T-cell (primary cell): ENCODE measurements at regions of chr11 and their contacts with region 1.

Region 1: GRCh38 chr11:6389921-6390724 is at the start of gene SMPD1:
- DNase-seq: peak; percentile 87 to 97 (median 92)
- ATAC-seq: peak; percentile 86 to 92 (median 88)
- H3K4me3 ChIP-seq: peak within 1 kb of the TSS; percentile 79 to 80
- H3K4me3 Mint-ChIP-seq: peak within 1 kb of the TSS; percentile 88 to 93 (median 90)
- H3K27ac ChIP-seq: peak within 1 kb of the TSS; percentile 85
- H3K27ac Mint-ChIP-seq: peak within 1 kb of the TSS; percentile 97 to 98
- H3K4me1 ChIP-seq: peaks cover 20 to 54% of the 10 kb centered on the region in 2 experiments
- H3K4me1 Mint-ChIP-seq: peaks cover 62 to 71% (median 67%) of the 10 kb centered on the region in 3 donors
- H3K27me3 ChIP-seq: no peaks in the 10 kb centered on the region
- H3K27me3 Mint-ChIP-seq: no peaks in the 10 kb centered on the region
- total RNA-seq, gene SMPD1: 33.5 to 58.3 (median 38.3) TPM

Region 2: DNA sequence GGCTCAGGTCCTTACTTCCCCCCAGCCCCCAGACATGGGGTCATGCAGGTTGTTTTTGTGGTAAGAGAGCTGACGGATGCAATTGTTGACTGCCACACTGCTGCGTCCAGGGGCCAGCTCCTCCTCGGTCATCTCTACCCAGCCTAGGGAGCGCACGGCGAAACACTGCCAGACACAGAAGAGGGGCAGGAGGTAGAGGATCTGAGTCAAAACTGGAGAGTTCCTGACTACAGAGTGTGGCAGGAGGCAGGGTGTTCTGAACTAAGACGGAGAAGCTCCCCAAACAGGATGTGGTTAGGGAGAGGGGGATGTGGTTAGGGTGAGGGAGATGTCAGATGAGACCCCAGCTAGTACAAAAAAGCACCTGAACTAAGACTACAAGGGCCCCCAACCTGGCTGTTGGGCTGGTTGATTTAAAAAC is 12.4 kb after region 1 on chr11:
- CTCF ChIA-PET with region 1: interaction called in 1 of 2 experiments, 15 read pairs
- POLR2A ChIA-PET with region 1: interaction called, 9 to 16 read pairs
- DNase-seq: peak; percentile 51 to 94 (median 83)
- ATAC-seq: peak; percentile 87 to 89 (median 88)
- H3K4me3 ChIP-seq: peak overlapping the region in 1 of 2 donors; percentile 38
- H3K4me3 Mint-ChIP-seq: peak overlapping the region; percentile 73 to 92 (median 78)
- H3K27ac ChIP-seq: peak overlapping the region; percentile 90
- H3K27ac Mint-ChIP-seq: peak overlapping the region; percentile 96 to 99
- H3K4me1 ChIP-seq: peaks cover 62 to 75% of the 10 kb centered on the region in 2 experiments
- H3K4me1 Mint-ChIP-seq: peaks cover 93 to 98% (median 94%) of the 10 kb centered on the region in 3 donors
- H3K27me3 ChIP-seq: no peaks in the 10 kb centered on the region
- H3K27me3 Mint-ChIP-seq: no peaks in the 10 kb centered on the region

Region 3: GRCh38 chr11:6419009-6419631 is 29.0 kb after region 1 on chr11 and contains the start of gene APBB1:
- CTCF ChIA-PET with region 1: interaction called in 1 of 2 experiments, 19 read pairs
- POLR2A ChIA-PET with region 1: interaction called, 3 to 6 read pairs
- DNase-seq: peak; percentile 51 to 88 (median 73)
- ATAC-seq: peak; percentile 70 to 82 (median 78)
- H3K4me3 ChIP-seq: peak within 1 kb of the TSS; percentile 64 to 75
- H3K4me3 Mint-ChIP-seq: peak within 1 kb of the TSS in 1 of 3 donors; percentile 86
- H3K27ac ChIP-seq: peak within 1 kb of the TSS; percentile 57
- H3K27ac Mint-ChIP-seq: peak within 1 kb of the TSS; percentile 89
- H3K4me1 ChIP-seq: peaks cover 36 to 50% of the 10 kb centered on the region in 2 experiments
- H3K4me1 Mint-ChIP-seq: peaks cover 9 to 19% (median 15%) of the 10 kb centered on the region in 3 donors
- H3K27me3 ChIP-seq: peaks cover 0 to 2% of the 10 kb centered on the region in 2 experiments
- H3K27me3 Mint-ChIP-seq: peaks cover 0 to 19% of the 10 kb centered on the region in 2 donors
- total RNA-seq, gene APBB1: 71.3 to 152 (median 106) TPM

Region 4: DNA sequence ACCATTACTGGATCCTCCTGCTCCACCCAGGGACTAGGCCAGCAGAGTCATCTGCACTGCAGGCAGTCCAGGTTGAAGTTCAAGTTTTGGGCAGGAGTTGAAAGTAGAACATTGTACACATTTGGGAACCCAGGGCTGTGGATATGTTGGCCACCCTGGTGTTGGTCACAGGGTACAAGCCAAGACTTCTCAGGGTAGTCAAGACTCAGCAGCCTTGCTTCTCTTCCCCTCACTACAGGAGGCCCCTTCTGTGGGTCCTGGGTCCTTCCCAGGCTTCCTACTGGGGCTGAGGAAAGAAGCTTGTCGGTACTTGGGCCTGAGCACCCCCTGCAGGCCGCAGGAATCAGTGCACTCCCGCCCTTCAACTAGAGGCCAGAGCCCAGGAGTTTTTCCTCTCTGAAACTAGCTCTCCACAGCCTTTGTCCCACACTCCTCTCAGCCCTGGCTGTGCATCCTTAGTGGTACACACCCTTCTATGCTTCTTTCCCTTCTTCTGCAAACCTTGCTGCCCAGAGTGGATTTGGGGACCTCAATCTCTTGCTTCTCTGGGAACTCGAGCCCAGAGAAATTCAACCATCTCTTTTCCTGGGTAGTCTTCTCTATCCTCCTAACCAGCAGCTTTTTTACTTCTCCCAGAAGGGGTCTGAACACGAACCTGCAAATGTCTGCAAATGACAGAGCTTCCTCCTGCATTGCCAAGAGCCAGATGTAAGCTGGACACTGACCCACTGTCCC is 53.3 kb after region 1 on chr11:
- CTCF ChIA-PET with region 1: interaction called, 14 to 26 read pairs
- POLR2A ChIA-PET with region 1: no interaction called
- DNase-seq: peak in 33 of 35 experiments; percentile 20 to 79 (median 48)
- ATAC-seq: peak; percentile 83 to 92 (median 84)
- H3K4me3 ChIP-seq: no peak overlapping the region
- H3K4me3 Mint-ChIP-seq: no peak overlapping the region
- H3K27ac ChIP-seq: no peak overlapping the region
- H3K27ac Mint-ChIP-seq: no peak overlapping the region
- H3K4me1 ChIP-seq: peaks cover 13 to 19% of the 10 kb centered on the region in 2 experiments
- H3K4me1 Mint-ChIP-seq: peaks cover 0 to 3% (median 2%) of the 10 kb centered on the region in 3 donors
- H3K27me3 ChIP-seq: no peaks in the 10 kb centered on the region
- H3K27me3 Mint-ChIP-seq: no peaks in the 10 kb centered on the region

Region 5: GRCh38 chr11:6475968-6476367 is 85.8 kb after region 1 on chr11:
- CTCF ChIA-PET with region 1: interaction called in 1 of 2 experiments, 3 read pairs
- POLR2A ChIA-PET with region 1: interaction called in 1 of 2 experiments, 16 read pairs
- DNase-seq: no peak
- ATAC-seq: no peak
- H3K4me3 ChIP-seq: no peak overlapping the region
- H3K4me3 Mint-ChIP-seq: peak overlapping the region in 1 of 3 donors; percentile 23
- H3K27ac ChIP-seq: no peak overlapping the region
- H3K27ac Mint-ChIP-seq: peak overlapping the region; percentile 23 to 91
- H3K4me1 ChIP-seq: peaks cover 17 to 27% of the 10 kb centered on the region in 2 experiments
- H3K4me1 Mint-ChIP-seq: peaks cover 42 to 44% (median 44%) of the 10 kb centered on the region in 3 donors
- H3K27me3 ChIP-seq: no peaks in the 10 kb centered on the region
- H3K27me3 Mint-ChIP-seq: no peaks in the 10 kb centered on the region

Region 6: GRCh38 chr11:6481012-6481923 is 91.1 kb after region 1 on chr11 and contains the starts of genes ARFIP2 and TIMM10B:
- CTCF ChIA-PET with region 1: interaction called in 1 of 2 experiments, 3 read pairs
- POLR2A ChIA-PET with region 1: interaction called in 1 of 2 experiments, 16 read pairs
- DNase-seq: peak; percentile 82 to 99 (median 97)
- ATAC-seq: peak; percentile 95 to 98 (median 98)
- H3K4me3 ChIP-seq: peak within 1 kb of the TSS; percentile 90 to 94
- H3K4me3 Mint-ChIP-seq: peak within 1 kb of the TSS; percentile 92 to 96 (median 96)
- H3K27ac ChIP-seq: peak within 1 kb of the TSS; percentile 97
- H3K27ac Mint-ChIP-seq: peak within 1 kb of the TSS; percentile 97 to 98
- H3K4me1 ChIP-seq: peaks cover 18 to 26% of the 10 kb centered on the region in 2 experiments
- H3K4me1 Mint-ChIP-seq: peaks cover 43 to 46% (median 45%) of the 10 kb centered on the region in 3 donors
- H3K27me3 ChIP-seq: no peaks in the 10 kb centered on the region
- H3K27me3 Mint-ChIP-seq: no peaks in the 10 kb centered on the region
- total RNA-seq, gene ARFIP2: 47.3 to 61.9 (median 50.0) TPM
- total RNA-seq, gene TIMM10B: 49.3 to 64.0 (median 57.6) TPM

Region 7: DNA sequence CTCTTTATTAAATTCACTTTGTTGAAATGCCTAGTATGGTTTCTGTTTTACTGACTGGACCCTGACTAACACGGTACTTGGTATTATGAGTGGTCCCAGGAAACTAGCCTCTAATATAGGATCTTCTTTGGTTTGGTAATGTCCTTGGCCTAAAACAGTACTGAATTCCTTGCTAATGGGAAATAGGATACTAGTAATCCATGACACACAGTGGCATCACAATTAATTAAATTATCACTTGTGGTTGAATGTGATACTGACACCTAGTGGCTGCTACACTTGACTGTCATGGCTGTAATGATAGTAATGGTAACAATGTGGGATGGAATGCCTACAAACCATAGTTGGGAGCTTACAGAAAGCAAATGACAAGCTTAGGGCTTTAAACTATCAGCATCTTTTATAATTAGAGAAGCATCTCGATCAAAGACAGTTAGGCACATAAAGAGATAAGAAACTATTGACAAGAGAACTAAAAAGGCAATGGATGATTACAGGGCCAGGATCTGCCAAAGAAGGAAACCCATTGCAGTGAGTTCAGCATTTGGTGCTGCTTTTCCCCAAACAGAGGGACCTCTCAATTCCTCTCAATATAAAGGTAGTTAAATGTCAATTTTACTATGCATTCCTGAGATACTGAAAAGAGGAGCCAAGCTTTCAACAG is 115.6 kb after region 1 on chr11:
- CTCF ChIA-PET with region 1: no interaction called
- POLR2A ChIA-PET with region 1: no interaction called
- DNase-seq: peak in 5 of 35 experiments; percentile 12 to 65 (median 17)
- ATAC-seq: peak in 2 of 4 experiments; percentile 36 to 61
- H3K4me3 ChIP-seq: no peak overlapping the region
- H3K4me3 Mint-ChIP-seq: no peak overlapping the region
- H3K27ac ChIP-seq: no peak overlapping the region
- H3K27ac Mint-ChIP-seq: no peak overlapping the region
- H3K4me1 ChIP-seq: no peaks in the 10 kb centered on the region
- H3K4me1 Mint-ChIP-seq: peaks cover 0 to 3% (median 0%) of the 10 kb centered on the region in 3 donors
- H3K27me3 ChIP-seq: no peaks in the 10 kb centered on the region
- H3K27me3 Mint-ChIP-seq: no peaks in the 10 kb centered on the region

Region 8: DNA sequence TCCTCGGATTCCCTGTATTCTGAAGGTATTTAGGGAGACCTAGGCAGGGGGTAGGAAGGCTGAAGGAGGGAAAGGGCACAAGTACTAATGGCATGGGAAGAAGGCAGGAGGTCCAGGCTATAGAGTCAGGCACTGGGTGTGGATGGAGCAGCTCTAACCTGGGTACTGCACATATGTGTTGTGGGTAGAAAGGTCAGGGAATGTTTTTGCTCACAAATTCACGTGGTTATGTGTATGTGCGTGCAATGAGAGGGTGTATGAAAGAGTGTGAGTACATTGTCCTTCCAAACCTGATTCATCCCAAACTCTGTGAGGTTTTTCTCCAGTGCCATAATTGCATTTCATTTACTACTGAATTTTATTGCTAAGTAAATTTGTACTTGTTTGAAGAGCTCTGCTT is 130.1 kb after region 1 on chr11:
- CTCF ChIA-PET with region 1: no interaction called
- POLR2A ChIA-PET with region 1: no interaction called
- DNase-seq: no peak
- ATAC-seq: no peak
- H3K4me3 ChIP-seq: no peak overlapping the region
- H3K4me3 Mint-ChIP-seq: no peak overlapping the region
- H3K27ac ChIP-seq: no peak overlapping the region
- H3K27ac Mint-ChIP-seq: no peak overlapping the region
- H3K4me1 ChIP-seq: no peaks in the 10 kb centered on the region
- H3K4me1 Mint-ChIP-seq: peaks cover 0 to 14% (median 8%) of the 10 kb centered on the region in 3 donors
- H3K27me3 ChIP-seq: no peaks in the 10 kb centered on the region
- H3K27me3 Mint-ChIP-seq: no peaks in the 10 kb centered on the region

Region 9: GRCh38 chr11:6531267-6531752 is 141.2 kb after region 1 on chr11:
- CTCF ChIA-PET with region 1: no interaction called
- POLR2A ChIA-PET with region 1: interaction called in 1 of 2 experiments, 12 read pairs
- DNase-seq: peak in 7 of 35 experiments; percentile 3 to 69 (median 12)
- ATAC-seq: peak in 3 of 4 experiments; percentile 47 to 59 (median 57)
- H3K4me3 ChIP-seq: no peak overlapping the region
- H3K4me3 Mint-ChIP-seq: no peak overlapping the region
- H3K27ac ChIP-seq: no peak overlapping the region
- H3K27ac Mint-ChIP-seq: no peak overlapping the region
- H3K4me1 ChIP-seq: peaks cover 1 to 3% of the 10 kb centered on the region in 2 experiments
- H3K4me1 Mint-ChIP-seq: peaks cover 7 to 13% (median 12%) of the 10 kb centered on the region in 3 donors
- H3K27me3 ChIP-seq: no peaks in the 10 kb centered on the region
- H3K27me3 Mint-ChIP-seq: no peaks in the 10 kb centered on the region

Region 10: GRCh38 chr11:6646918-6647679 is 257.0 kb after region 1 on chr11:
- CTCF ChIA-PET with region 1: no interaction called
- POLR2A ChIA-PET with region 1: no interaction called
- DNase-seq: peak in 15 of 35 experiments; percentile 14 to 59 (median 25)
- ATAC-seq: peak; percentile 70 to 86 (median 79)
- H3K4me3 ChIP-seq: peak overlapping the region; percentile 7 to 38
- H3K4me3 Mint-ChIP-seq: no peak overlapping the region
- H3K27ac ChIP-seq: peak overlapping the region; percentile 83
- H3K27ac Mint-ChIP-seq: no peak overlapping the region
- H3K4me1 ChIP-seq: peaks cover 28 to 47% of the 10 kb centered on the region in 2 experiments
- H3K4me1 Mint-ChIP-seq: no peaks in the 10 kb centered on the region
- H3K27me3 ChIP-seq: no peaks in the 10 kb centered on the region
- H3K27me3 Mint-ChIP-seq: no peaks in the 10 kb centered on the region